ENCODE measurements at regions of chr1 and their contacts with region 1.

Region 1: GRCh38 chr1:234978397-234979295 is 150.0 kb downstream of the TOMM20 start:
- H3K4me3 ChIP-seq: no peak overlapping the region
- H3K27ac ChIP-seq: peak overlapping the region; percentile 56
- H3K4me1 ChIP-seq: peaks cover 41% of the 10 kb centered on the region
- CTCF ChIP-seq: peak; percentile 73

Region 2: DNA sequence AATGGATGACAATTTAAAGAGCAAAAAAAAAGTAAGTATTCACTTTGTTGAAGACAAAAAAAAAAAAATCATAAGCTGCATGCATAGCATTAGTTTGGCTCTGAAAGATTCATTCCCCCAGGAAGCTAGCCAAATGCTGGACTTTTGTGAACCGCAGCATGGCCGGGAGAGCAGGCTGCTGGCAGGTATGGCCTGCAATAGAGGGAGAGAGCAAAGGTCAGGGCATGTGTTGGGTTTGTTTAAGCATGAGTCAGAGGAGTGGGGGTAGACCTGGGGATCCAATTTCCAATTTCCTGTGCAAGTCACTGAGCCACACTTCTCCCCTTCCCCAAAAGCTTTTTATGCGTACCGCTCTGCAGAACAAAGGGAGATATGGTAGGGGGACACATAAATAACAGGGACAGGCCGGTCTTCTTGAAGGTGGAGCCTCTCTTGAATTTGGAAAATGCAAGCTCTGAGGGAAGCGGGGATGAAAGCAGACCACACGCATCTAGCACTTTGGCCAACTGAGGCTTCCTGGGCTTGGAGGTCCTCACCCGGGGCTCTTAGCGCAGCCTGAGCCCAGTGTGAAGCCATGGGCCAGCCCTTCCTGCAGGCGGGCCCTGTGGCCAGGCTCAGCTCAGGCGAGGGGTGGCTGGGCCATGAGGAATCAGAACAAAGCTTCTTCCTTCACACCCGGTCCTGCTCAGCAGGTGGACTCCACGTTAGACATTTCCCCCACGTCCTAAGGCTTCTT is 21.1 kb before region 1 on chr1:
- CTCF ChIA-PET with region 1: interaction called, 10 read pairs
- POLR2A ChIA-PET with region 1: interaction called, 11 read pairs
- H3K4me3 ChIP-seq: no peak overlapping the region
- H3K27ac ChIP-seq: peak overlapping the region; percentile 65
- H3K4me1 ChIP-seq: peaks cover 28% of the 10 kb centered on the region
- CTCF ChIP-seq: no peak

Region 3: GRCh38 chr1:235067263-235068172 is 88.9 kb after region 1 on chr1:
- CTCF ChIA-PET with region 1: interaction called, 5 read pairs
- POLR2A ChIA-PET with region 1: interaction called, 11 read pairs
- H3K4me3 ChIP-seq: no peak overlapping the region
- H3K27ac ChIP-seq: peak overlapping the region; percentile 40
- H3K4me1 ChIP-seq: peaks cover 9% of the 10 kb centered on the region
- CTCF ChIP-seq: no peak